Left cardiac atrium (tissue), 4 donors: ENCODE measurements at regions of chr17 and their contacts with region 1.

Region 1: GRCh38 chr17:34832376-34832775 is 128.9 kb downstream of the CCT6B start:
- DNase-seq: no peak
- ATAC-seq: no peak

Region 2: DNA sequence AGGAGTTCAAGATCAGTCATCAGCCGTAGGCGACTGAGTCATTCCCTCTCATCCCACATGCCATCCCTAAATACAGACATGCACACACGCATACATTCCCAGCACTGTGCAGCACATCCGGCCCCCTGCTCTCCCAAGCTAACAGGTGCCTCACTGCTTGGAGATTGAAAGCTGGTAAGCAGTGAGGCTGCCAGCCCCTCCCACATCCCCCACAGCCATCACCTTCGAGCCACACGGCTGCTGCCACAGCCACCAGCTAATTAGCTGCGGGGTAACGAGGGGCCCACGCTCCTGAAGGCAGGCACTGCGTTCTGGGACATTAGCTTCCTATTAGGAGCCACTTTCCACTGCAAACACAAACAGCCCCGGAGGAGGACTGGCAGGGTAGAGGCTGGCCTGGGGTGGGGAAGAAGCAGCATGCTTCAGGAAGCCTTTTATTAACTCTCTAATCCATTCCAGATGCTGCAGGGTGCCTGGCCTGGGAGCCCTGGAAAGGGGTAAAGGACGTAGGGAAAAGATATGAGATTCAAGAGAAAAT is 50.7 kb before region 1 on chr17:
- intact Hi-C with region 1: loop called in 1 of 2 experiments (anchors 5 kb)
- DNase-seq: no peak
- ATAC-seq: no peak

Region 3: GRCh38 chr17:34798581-34798980 is 33.8 kb before region 1 on chr17:
- intact Hi-C with region 1: no loop called
- DNase-seq: no peak
- ATAC-seq: no peak

Region 4: GRCh38 chr17:34892461-34893249 is 60.3 kb after region 1 on chr17:
- intact Hi-C with region 1: no loop called
- DNase-seq: no peak
- ATAC-seq: no peak

Region 5: DNA sequence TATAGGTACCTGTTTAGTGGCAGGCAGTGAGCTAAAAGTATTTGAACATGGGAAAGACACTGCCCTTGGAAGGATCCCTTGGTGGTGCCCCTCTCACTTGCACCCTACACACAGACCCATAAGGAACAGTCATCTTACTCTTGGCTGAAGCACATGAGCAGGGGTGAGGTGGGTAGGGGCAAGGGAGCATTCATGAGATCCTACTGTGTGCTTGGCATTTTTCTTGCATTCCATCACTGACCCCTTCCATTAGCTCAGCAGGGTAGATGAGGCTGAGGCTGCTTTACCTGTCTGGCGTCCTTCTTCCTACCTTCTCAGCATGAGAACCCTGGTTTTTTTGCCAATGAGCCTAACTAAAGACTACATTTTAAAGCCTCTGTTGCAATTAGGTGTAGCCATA is 80.6 kb after region 1 on chr17:
- intact Hi-C with region 1: no loop called
- DNase-seq: no peak
- ATAC-seq: no peak